ENCODE measurements at regions of chr2 and their contacts with region 1.

Region 1: GRCh38 chr2:172179045-172179701 is 76.5 kb upstream of the DLX2 start:
- DNase-seq: peak; percentile 84 to 86
- H3K4me3 ChIP-seq: no peak overlapping the region
- H3K27ac ChIP-seq: no peak overlapping the region
- H3K4me1 ChIP-seq: peaks cover 29% of the 10 kb centered on the region
- H3K27me3 ChIP-seq: no peaks in the 10 kb centered on the region
- CTCF ChIP-seq: no peak

Region 2: DNA sequence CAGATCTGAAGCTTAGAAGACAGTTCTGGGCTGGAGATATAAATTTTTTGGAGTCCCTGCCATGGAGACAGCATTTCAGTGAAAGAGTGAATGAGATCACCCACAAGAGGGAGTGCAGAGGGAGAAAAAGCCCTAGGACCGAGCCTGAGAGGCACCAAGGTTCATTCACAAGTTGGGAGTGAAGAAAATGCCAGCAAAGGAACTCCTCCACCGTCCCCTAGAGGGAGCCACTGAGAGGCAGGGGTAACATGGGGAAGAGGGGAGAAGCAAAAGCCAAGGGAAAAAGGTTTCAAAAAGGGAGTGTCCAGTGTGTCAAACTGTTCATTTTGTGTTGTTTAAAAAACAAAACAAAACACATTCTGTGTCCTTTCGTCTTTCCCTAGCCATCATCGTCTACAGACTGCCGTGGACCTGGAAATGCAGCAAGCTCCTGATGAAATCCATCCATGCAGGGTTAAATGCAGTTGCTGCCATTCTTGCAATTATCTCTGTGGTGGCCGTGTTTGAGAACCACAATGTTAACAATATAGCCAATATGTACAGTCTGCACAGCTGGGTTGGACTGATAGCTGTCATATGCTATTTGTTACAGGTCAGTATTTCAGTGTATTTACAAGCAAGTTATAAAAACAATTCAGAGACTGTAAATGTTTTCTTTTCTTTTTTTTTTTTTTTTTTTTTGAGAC is 637.8 kb before region 1 on chr2:
- CTCF ChIA-PET with region 1: no interaction called
- POLR2A ChIA-PET with region 1: no interaction called
- intact Hi-C with region 1: loop called (anchors 5 kb)
- DNase-seq: peak in 1 of 2 experiments; percentile 47
- H3K4me3 ChIP-seq: no peak overlapping the region
- H3K27ac ChIP-seq: no peak overlapping the region
- H3K4me1 ChIP-seq: no peaks in the 10 kb centered on the region
- H3K27me3 ChIP-seq: no peaks in the 10 kb centered on the region
- CTCF ChIP-seq: peak; percentile 90

Region 3: GRCh38 chr2:172120118-172120517 is 59.1 kb before region 1 on chr2:
- CTCF ChIA-PET with region 1: no interaction called
- POLR2A ChIA-PET with region 1: no interaction called
- intact Hi-C with region 1: no loop called
- DNase-seq: no peak
- H3K4me3 ChIP-seq: no peak overlapping the region
- H3K27ac ChIP-seq: peak overlapping the region; percentile 88
- H3K4me1 ChIP-seq: peaks cover 43% of the 10 kb centered on the region
- H3K27me3 ChIP-seq: no peaks in the 10 kb centered on the region
- CTCF ChIP-seq: no peak

Region 4: GRCh38 chr2:172162739-172163336 is 16.3 kb before region 1 on chr2:
- CTCF ChIA-PET with region 1: no interaction called
- POLR2A ChIA-PET with region 1: no interaction called
- intact Hi-C with region 1: no loop called
- DNase-seq: no peak
- H3K4me3 ChIP-seq: no peak overlapping the region
- H3K27ac ChIP-seq: no peak overlapping the region
- H3K4me1 ChIP-seq: no peaks in the 10 kb centered on the region
- H3K27me3 ChIP-seq: no peaks in the 10 kb centered on the region
- CTCF ChIP-seq: no peak

Region 5: GRCh38 chr2:172200495-172201085 is 21.4 kb after region 1 on chr2:
- CTCF ChIA-PET with region 1: interaction called, 16 read pairs
- POLR2A ChIA-PET with region 1: no interaction called
- intact Hi-C with region 1: loop called (anchors 1 kb)
- DNase-seq: no peak
- H3K4me3 ChIP-seq: no peak overlapping the region
- H3K27ac ChIP-seq: no peak overlapping the region
- H3K4me1 ChIP-seq: peaks cover 8% of the 10 kb centered on the region
- H3K27me3 ChIP-seq: no peaks in the 10 kb centered on the region
- CTCF ChIP-seq: peak; percentile 84

Region 6: DNA sequence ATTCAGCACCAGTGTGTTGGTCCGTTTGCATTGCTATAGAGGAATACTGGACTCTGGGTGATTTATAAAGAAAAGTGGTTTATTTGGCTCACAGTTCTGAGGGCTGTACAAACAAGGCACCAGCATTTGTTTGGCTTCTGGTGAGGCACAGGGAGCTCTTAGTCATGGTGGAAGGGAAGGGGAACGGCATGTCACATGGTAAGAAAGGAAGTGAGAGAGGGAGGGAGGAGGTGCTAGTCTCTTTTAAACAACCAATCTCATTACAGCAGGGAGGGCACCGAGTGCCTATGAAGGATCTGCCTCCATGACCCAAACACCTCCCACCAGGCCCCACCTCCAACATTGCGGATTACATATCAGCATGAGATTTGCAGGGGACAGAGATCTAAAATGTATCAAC is 67.5 kb after region 1 on chr2:
- CTCF ChIA-PET with region 1: interaction called, 3 read pairs
- POLR2A ChIA-PET with region 1: interaction called, 8 read pairs
- intact Hi-C with region 1: loop called (anchors 1 kb)
- DNase-seq: peak in 1 of 2 experiments; percentile 46
- H3K4me3 ChIP-seq: no peak overlapping the region
- H3K27ac ChIP-seq: peak overlapping the region; percentile 70
- H3K4me1 ChIP-seq: peaks cover 62% of the 10 kb centered on the region
- H3K27me3 ChIP-seq: no peaks in the 10 kb centered on the region
- CTCF ChIP-seq: no peak

Measured in PC-9 (cell line).